OCI-LY7 (cell line): ENCODE measurements at regions of chr3 and their contacts with region 1.

Region 1: GRCh38 chr3:172007069-172007378 is 32.4 kb upstream of the FNDC3B start:
- DNase-seq: no peak
- H3K4me3 ChIP-seq: no peak overlapping the region
- H3K27ac ChIP-seq: no peak overlapping the region
- H3K4me1 ChIP-seq: no peaks in the 10 kb centered on the region
- CTCF ChIP-seq: no peak

Region 2: GRCh38 chr3:171996178-171996817 is 10.7 kb before region 1 on chr3:
- CTCF ChIA-PET with region 1: no interaction called
- POLR2A ChIA-PET with region 1: interaction called, 16 read pairs
- intact Hi-C with region 1: no loop called
- DNase-seq: no peak
- H3K4me3 ChIP-seq: no peak overlapping the region
- H3K27ac ChIP-seq: no peak overlapping the region
- H3K4me1 ChIP-seq: no peaks in the 10 kb centered on the region
- CTCF ChIP-seq: no peak